GM10248 (cell line): ENCODE measurements at regions of chr1 and their contacts with region 1.

Region 1: DNA sequence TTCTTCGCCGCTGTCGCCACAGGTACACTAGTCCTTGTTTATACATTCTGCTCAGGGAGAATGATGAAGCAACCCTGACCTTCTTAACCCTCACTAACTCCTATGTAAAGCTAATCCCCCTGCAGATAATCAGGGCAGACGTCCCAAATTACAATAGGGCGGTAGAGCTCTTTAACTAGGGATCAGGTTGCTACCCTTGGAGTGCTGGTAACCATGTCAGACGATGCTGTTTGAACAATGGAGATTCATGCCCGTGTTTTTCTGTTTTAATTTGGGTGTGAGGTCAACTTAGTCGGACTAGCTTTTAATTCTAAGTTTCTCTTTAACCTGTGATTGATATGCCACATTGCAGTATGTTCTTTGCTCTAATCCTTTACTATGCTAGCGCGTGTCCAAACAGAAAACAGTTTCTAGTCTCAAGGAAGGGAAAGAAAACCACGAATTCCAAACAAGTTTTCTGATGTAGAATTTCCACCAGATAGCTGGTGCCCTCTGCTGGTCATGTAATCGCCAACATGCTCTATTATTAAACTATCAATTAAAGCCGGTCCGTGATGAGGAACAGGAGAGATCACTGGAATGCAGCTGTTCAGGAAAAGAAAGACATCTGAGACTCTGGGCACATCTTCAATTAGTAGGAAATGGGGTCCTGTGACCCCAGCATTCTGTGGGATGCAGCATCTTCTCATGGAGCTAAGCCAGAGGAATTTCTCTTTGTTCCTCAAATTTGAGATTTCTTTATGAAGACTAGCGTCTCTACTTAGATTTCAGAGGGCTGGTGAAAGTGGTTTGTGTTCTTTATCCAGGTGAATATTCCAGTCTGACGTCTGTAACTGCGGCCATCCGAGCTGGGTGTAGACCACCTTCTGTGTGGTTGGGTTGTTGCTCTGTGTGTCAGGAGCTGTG is 18.3 kb upstream of the VAMP3 start:
- DNase-seq: peak; percentile 37
- CTCF ChIP-seq: peak; percentile 74

Region 2: DNA sequence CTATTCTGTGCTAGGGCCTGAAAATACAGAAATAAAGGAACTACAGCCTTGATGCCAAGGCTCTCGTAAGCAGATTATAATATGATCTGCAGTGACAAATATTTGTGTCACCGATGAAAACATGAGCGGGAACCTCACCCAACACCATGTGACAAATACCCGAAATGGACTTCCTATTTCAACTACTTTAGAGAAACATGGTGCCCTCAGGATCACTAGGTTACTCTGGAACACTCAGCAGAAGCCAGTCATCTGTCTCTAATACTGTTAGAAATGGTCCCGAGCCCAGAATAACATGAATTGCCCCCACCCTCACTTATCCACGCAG is 17.9 kb after region 1 on chr1:
- CTCF ChIA-PET with region 1: interaction called, 74 read pairs
- POLR2A ChIA-PET with region 1: no interaction called
- DNase-seq: no peak
- CTCF ChIP-seq: no peak

Region 3: GRCh38 chr1:7808253-7808844 is 55.6 kb after region 1 on chr1:
- CTCF ChIA-PET with region 1: interaction called, 10 read pairs
- POLR2A ChIA-PET with region 1: no interaction called
- DNase-seq: peak; percentile 39
- CTCF ChIP-seq: peak; percentile 54

Region 4: GRCh38 chr1:7850786-7851185 is 98.0 kb after region 1 on chr1:
- CTCF ChIA-PET with region 1: interaction called, 10 read pairs
- POLR2A ChIA-PET with region 1: no interaction called
- DNase-seq: no peak
- CTCF ChIP-seq: no peak

Region 5: DNA sequence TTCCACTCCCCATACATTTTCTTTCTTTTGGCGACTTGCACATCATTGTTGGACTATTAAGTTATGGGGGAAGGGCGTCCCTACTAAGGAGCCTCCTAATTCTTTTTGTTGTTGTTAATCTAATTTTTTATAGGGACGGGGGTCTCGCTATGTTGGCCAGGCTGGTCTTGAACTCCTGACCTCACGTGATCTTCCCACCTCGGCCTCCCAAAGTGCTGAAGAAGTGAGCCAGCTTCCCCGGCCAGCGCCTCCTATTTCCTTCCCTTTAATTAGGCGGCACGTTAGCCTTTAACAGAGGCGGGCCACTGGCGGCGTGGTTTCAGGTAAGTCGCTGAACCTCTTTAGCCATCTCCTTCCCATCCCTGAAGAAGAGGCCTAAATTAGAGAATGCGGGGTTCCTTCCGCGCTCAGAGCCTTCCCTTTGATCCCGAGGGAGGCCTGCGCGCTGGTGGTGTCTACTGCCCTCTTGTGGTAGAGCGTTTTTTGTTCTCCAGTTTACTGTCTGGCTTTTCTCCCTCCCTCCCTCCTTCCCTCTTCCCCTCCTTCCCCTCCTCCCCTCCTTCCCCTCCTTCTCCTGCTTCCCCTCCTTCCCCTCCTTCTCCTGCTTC is 149.8 kb after region 1 on chr1:
- CTCF ChIA-PET with region 1: interaction called, 14 read pairs
- POLR2A ChIA-PET with region 1: no interaction called
- DNase-seq: peak; percentile 77
- CTCF ChIP-seq: peak; percentile 80